ENCODE measurements at regions of chr12 and their contacts with region 1.

Region 1: GRCh38 chr12:94435511-94435927 is 24.1 kb downstream of the CEP83 start:
- DNase-seq: no peak
- H3K4me3 ChIP-seq: no peak overlapping the region
- CTCF ChIP-seq: no peak

Region 2: GRCh38 chr12:94133964-94134795 is 301.3 kb before region 1 on chr12:
- CTCF ChIA-PET with region 1: interaction called, 53 read pairs
- POLR2A ChIA-PET with region 1: no interaction called
- DNase-seq: peak; percentile 3
- H3K4me3 ChIP-seq: no peak overlapping the region
- CTCF ChIP-seq: peak; percentile 52

Region 3: GRCh38 chr12:94145191-94145983 is 290.1 kb before region 1 on chr12:
- CTCF ChIA-PET with region 1: interaction called, 74 read pairs
- POLR2A ChIA-PET with region 1: no interaction called
- DNase-seq: no peak
- H3K4me3 ChIP-seq: no peak overlapping the region
- CTCF ChIP-seq: peak; percentile 31

Region 4: DNA sequence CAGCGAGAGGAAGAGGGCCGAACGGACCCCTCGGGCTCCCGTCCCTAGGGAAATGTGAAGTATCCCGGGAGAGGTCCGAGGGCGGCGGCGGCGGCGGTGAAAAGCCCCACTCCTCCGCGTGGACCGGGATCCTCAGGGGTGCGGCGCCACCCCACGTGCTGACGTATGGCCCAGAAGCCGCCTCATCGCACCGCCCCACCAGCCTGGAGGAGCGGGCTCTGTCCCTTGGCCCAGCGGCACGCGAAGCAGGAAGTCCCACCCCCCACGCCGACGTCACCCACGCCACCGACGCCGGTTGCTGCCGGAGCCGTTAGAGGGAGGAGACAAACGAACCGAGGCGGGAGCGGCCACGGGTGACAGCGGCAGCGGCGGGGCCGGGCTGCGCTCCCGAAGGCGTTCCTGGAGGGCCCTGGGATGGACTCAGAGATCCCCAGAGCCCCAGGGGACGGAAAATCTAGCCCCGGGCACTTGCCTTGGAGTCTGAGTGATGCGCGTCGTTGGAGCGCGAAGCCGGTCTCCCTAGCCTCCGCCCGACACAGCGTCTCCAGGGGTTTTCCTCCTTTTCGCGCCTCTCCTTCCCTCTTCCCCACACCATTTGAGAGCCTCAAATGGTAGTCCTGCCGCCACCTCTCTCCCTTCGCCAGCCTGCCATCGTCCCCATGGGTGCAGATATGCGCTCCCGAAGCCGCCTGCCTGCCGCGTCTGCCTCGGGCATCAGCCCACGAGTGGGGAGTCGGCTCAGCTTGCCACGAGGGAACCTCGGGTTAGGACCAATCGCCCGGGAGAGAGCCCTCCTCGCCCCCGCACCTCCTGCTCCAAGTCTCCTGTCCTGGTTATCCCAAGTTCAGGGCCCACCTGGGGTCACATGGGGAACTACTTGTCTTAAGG is 24.5 kb after region 1 on chr12 and contains the start of gene CEP83:
- CTCF ChIA-PET with region 1: interaction called, 12 read pairs
- POLR2A ChIA-PET with region 1: no interaction called
- DNase-seq: peak; percentile 37
- H3K4me3 ChIP-seq: peak within 1 kb of the TSS; percentile 84
- CTCF ChIP-seq: no peak